ENCODE measurements at regions of chr6 and their contacts with region 1.

Region 1: DNA sequence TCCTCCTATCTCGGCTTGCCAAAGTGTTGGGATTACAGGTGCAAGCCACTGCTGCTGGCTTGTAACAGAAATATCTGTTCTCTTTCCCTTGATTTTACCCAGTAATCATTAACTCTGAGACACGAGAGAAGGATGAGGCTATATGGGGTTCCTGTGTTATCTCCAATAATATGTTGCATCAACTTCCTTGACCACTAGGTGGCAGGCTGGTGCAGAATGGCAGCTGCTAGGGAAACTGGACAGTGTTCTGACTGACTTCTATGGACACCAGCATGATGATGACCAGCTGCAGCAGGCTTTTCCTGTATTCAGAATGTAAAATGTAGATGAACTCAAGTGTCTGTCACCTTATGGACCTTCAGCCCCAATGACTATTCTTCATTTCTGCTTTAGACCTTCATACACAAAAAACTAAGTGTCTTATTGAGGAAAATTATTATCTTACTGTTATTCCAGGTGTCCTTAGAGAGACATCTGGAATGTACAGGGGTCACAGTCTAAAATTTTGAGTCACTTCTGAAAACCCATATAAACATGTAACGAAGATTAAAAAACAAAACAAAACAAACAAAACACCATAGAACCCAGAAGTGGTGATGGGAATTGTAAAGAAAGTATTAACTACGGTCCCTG is 20.4 kb upstream of the CD109 start:
- DNase-seq: peak in 3 of 4 donors; percentile 64 to 79 (median 67)
- ATAC-seq: peak; percentile 98
- H3K4me3 ChIP-seq: no peak overlapping the region
- H3K27ac ChIP-seq: no peak overlapping the region
- H3K4me1 ChIP-seq: no peaks in the 10 kb centered on the region
- H3K27me3 ChIP-seq: no peaks in the 10 kb centered on the region
- CTCF ChIP-seq: peak; percentile 70 to 79

Region 2: GRCh38 chr6:73732845-73733675 is 57.5 kb after region 1 on chr6:
- intact Hi-C with region 1: loop called in 1 of 2 experiments (anchors 5 kb)
- DNase-seq: peak in 3 of 4 donors; percentile 34 to 72 (median 57)
- ATAC-seq: peak; percentile 99
- H3K4me3 ChIP-seq: no peak overlapping the region
- H3K27ac ChIP-seq: no peak overlapping the region
- H3K4me1 ChIP-seq: peaks cover 0 to 7% of the 10 kb centered on the region in 2 donors
- H3K27me3 ChIP-seq: no peaks in the 10 kb centered on the region
- CTCF ChIP-seq: peak; percentile 84 to 91